ENCODE measurements at regions of chr12 and their contacts with region 1.

Region 1: DNA sequence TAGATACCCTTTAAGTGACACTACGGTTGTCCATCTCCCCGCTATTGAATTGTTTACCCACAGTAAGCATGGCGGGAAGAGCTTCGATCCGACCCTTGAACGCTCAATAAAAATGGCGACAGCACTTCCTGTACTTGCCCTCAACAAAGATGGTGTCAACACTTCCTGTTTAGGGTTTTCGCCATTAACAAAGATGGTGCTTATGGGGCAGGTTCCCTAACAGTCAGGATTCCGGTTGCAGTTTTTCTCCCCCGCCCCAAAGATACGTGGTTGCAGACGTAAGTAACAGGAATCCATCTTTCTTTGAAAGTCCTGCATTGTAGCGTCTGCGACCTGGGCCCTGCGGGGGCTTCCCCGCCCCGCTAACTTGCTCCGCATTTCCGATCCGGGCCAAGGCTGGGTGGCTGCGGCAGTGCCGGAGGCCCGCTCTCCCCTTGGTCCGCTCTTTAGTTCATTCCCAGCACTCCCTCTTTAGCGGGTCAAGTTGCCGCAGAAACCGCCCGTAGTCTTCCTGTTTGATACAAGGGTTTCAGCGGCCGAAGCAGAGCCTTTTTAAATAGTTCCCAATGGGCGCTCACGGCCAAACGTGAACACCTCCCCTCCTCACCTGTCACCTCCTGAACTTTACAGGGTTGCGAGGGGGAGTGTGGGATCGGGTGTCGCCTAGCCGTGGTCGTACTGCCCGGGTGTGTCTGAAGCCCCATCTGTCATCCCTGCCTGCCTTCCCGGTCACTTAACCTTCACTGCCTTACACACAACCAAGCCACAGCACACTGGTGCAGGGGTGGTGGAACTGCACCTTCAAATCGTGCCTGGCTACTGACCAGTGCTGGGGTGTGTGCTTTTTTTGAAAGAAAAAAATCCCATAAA is at the start of gene CRADD:
- DNase-seq: peak; percentile 99
- ATAC-seq: peak; percentile 96
- H3K4me3 ChIP-seq: peak within 1 kb of the TSS; percentile 55
- H3K27ac ChIP-seq: peak within 1 kb of the TSS; percentile 87
- H3K4me1 ChIP-seq: peaks cover 2% of the 10 kb centered on the region; the same call in 1 of the 2 replicates
- H3K27me3 ChIP-seq: no peaks in the 10 kb centered on the region
- CTCF ChIP-seq: no peak
- POLR2A ChIP-seq: peak; percentile 86
- RAD21 ChIP-seq: 0 out of 2 replicates have a peak, but pooled peaks have one; percentile 4
- total RNA-seq, gene CRADD: 12.2 and 14.0 TPM in 2 replicates

Region 2: GRCh38 chr12:93616584-93617101 is 60.8 kb before region 1 on chr12:
- CTCF ChIA-PET with region 1: no interaction called
- POLR2A ChIA-PET with region 1: no interaction called
- dilution Hi-C with region 1: no loop called
- in situ Hi-C with region 1: no loop called
- intact Hi-C with region 1: no loop called
- DNase-seq: peak; percentile 81
- ATAC-seq: peak; percentile 49; the same call in 1 of the 2 replicates
- H3K4me3 ChIP-seq: no peak overlapping the region
- H3K27ac ChIP-seq: no peak overlapping the region
- H3K4me1 ChIP-seq: peaks cover 5% of the 10 kb centered on the region
- H3K27me3 ChIP-seq: no peaks in the 10 kb centered on the region
- CTCF ChIP-seq: no peak
- POLR2A ChIP-seq: no peak
- RAD21 ChIP-seq: no peak

Region 3: DNA sequence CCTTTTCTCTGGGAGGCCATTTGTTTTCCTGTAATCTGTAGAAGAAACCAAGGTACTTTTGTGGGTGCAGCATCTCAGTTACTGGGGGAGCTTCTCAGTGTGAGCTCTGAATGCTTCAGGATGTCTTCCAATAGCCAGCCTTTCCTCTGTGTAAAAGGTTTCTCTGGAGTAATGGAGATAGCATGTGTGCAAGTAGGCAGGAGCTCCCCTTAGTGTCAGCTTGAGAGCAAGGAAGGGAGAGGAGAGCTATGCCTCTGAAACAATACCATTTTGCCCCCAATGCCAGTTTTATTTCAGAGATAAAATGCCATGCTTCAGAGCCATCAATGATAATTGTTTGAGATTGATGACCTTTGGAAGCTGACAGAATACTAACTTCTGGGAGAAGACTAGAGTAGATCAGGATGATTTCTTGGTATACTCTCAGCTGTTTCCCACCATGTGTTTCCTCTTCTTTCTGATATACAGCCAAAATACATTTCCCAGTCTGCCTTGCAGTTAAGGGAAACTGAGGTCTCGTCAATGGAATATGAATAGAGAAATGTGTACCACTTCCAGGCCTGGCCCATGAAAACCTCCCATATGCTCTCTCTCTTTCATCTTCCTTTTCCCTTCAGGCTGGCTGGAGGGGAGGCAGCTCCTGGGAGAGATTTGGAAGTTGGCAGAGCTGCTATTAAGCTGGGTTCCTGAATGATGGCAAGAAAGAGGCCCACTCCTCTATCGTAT is 125.4 kb after region 1 on chr12:
- CTCF ChIA-PET with region 1: no interaction called
- POLR2A ChIA-PET with region 1: no interaction called
- dilution Hi-C with region 1: no loop called
- in situ Hi-C with region 1: no loop called
- intact Hi-C with region 1: no loop called
- DNase-seq: peak; percentile 47
- ATAC-seq: peak; percentile 79
- H3K4me3 ChIP-seq: no peak overlapping the region
- H3K27ac ChIP-seq: peak overlapping the region; percentile 85; the same call in 1 of the 2 replicates
- H3K4me1 ChIP-seq: peaks cover 12% of the 10 kb centered on the region
- H3K27me3 ChIP-seq: no peaks in the 10 kb centered on the region
- CTCF ChIP-seq: no peak; the same call in 1 of the 2 replicates
- POLR2A ChIP-seq: no peak
- RAD21 ChIP-seq: peak; percentile 43

Region 4: DNA sequence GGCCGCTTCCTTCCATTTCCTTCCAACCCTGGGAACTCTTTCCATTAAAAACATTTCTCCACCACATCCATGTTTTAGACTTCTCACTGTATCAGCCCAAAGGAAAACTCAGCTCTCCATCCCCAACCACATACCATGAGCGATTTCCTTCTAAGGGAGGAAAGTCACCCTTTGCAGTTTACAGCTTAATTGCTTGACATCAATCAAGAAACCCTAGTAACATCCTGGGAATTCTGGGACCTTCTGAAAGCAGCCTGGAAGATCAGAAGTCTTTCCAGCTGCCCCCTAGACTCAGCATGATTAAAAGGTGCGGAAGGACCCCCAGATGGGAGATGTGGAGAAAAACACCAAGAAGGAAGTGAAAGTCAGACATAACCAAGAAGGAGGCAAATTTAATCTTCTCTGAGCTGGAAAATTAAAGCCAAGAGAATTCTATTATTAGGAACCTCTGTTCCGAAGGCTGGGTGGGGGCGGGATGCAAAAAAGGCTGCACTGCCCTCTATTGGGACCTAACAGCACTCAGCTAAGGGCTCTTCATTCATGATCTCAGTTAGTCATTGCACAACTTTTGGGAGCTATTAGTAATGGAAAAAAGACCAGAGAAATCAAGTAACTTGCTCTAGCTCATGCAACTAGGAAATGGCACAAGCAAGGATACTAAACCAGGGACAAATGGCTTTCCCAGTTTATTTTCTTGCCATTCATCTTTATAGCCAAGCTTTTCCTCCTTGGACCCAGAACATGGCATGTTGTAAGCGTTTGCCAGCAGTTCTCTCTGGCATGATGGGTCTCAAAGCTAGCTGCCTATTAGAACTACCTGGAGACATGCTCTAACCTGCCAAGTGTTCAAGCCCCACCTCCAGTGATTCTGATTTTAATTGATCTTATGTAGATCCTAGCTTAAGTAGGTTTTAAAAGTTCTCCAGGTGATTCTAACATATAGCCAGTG is 397.8 kb after region 1 on chr12:
- CTCF ChIA-PET with region 1: no interaction called
- POLR2A ChIA-PET with region 1: no interaction called
- dilution Hi-C with region 1: no loop called
- in situ Hi-C with region 1: no loop called
- intact Hi-C with region 1: loop called (anchors 1 kb)
- DNase-seq: peak; percentile 89
- ATAC-seq: peak; percentile 97
- H3K4me3 ChIP-seq: no peak overlapping the region
- H3K27ac ChIP-seq: no peak overlapping the region
- H3K4me1 ChIP-seq: peaks cover 4% of the 10 kb centered on the region; the same call in 1 of the 2 replicates
- H3K27me3 ChIP-seq: no peaks in the 10 kb centered on the region
- CTCF ChIP-seq: peak; percentile 78
- POLR2A ChIP-seq: no peak
- RAD21 ChIP-seq: peak; percentile 67

Measured in IMR-90 (cell line).